Endothelial cell of umbilical vein (primary cell): ENCODE measurements at regions of chr3 and their contacts with region 1.

Region 1: GRCh38 chr3:30518181-30518864 is 88.1 kb upstream of the TGFBR2 start:
- DNase-seq: peak; percentile 99
- H3K4me3 ChIP-seq: no peak overlapping the region
- H3K27ac ChIP-seq: peak overlapping the region; percentile 93
- H3K4me1 ChIP-seq: peaks cover 66% of the 10 kb centered on the region
- H3K27me3 ChIP-seq: no peaks in the 10 kb centered on the region
- CTCF ChIP-seq: peak; percentile 17 to 37
- POLR2A ChIP-seq: peak; percentile 81

Region 2: GRCh38 chr3:30112902-30113484 is 405.3 kb before region 1 on chr3:
- CTCF ChIA-PET with region 1: interaction called, 3 read pairs
- POLR2A ChIA-PET with region 1: no interaction called
- dilution Hi-C with region 1: no loop called
- intact Hi-C with region 1: loop called (anchors 1 kb)
- DNase-seq: peak; percentile 76
- H3K4me3 ChIP-seq: no peak overlapping the region
- H3K27ac ChIP-seq: no peak overlapping the region
- H3K4me1 ChIP-seq: no peaks in the 10 kb centered on the region
- H3K27me3 ChIP-seq: peaks cover 0 to 2% of the 10 kb centered on the region in 2 experiments
- CTCF ChIP-seq: peak; percentile 26 to 37
- POLR2A ChIP-seq: no peak

Region 3: DNA sequence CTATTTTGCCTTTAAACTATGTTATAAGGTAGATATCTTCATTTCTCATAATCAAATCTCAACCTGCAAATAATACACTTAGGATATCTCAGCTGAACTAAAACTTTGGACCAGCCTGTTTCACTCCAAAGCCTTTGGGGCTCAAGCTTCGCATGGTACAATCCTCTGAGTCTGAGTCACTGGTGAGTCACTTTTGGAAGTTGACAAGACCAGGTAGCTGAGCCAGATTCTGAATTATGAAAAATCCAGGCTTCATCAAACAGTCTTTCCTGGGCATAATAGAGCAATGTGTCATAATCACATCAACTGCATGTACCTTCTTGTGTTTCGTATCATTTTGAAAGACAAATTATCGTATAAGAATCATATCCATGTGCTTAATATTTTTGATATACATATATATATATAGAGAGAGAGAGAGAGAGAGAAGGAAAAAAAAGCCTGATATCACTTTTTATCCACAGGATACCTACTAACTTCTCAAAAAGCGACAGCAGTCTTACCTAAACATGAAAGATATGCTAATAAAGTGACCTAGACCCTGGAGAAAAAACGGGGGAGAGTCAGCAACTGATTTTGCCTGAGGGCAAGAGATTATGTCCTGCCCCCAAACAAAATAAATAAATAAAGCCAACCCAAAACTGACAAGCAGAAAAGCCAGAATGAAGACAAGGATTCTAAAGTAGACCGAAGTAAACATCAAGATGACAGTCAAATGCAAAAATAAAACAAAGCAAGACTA is 175.8 kb before region 1 on chr3:
- CTCF ChIA-PET with region 1: interaction called, 8 read pairs
- POLR2A ChIA-PET with region 1: no interaction called
- dilution Hi-C with region 1: no loop called
- intact Hi-C with region 1: loop called (anchors 1 kb)
- DNase-seq: peak; percentile 94
- H3K4me3 ChIP-seq: peak overlapping the region in 1 of 3 experiments; percentile 32
- H3K27ac ChIP-seq: peak overlapping the region; percentile 98
- H3K4me1 ChIP-seq: peaks cover 62% of the 10 kb centered on the region
- H3K27me3 ChIP-seq: no peaks in the 10 kb centered on the region
- CTCF ChIP-seq: no peak
- POLR2A ChIP-seq: no peak

Region 4: DNA sequence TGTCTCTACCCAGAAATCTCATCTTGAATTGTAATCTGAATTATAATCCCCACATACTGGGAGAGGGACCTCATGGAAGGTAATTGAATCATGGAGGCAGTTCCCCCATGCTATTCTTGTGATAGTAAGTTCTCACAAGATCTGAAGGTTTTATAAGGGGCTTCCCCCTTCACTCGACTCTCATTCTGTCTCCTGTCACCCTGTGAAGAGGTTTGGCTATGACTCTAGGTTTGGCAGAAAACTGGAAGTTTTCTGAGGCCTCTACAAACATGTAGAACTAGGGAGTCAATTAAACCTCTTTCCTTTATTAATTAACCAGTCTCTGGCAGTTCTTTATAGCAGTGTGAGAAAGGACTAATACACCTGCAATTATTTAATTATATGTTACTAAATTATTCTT is 37.1 kb before region 1 on chr3:
- CTCF ChIA-PET with region 1: no interaction called
- POLR2A ChIA-PET with region 1: no interaction called
- dilution Hi-C with region 1: no loop called
- intact Hi-C with region 1: no loop called
- DNase-seq: no peak
- H3K4me3 ChIP-seq: no peak overlapping the region
- H3K27ac ChIP-seq: no peak overlapping the region
- H3K4me1 ChIP-seq: peaks cover 8% of the 10 kb centered on the region
- H3K27me3 ChIP-seq: no peaks in the 10 kb centered on the region
- CTCF ChIP-seq: no peak
- POLR2A ChIP-seq: no peak

Region 5: DNA sequence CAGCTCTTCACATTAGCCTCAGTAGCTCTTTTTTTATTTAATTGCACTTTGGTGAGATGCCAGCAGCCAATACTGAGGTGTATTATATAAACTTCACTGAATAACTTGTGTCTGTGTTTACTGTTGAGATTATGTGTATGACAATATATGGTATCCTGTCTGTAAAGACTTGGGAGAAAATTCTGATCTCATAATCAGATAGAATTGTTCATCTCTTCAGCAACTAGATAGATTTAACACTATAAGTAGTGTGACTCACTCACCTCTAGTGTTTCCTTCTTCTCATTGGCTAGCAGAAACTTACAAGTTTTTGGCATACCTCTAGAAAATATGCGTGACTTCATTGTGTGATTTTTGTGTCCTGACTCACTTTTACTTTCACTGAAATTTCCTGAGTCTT is 20.5 kb after region 1 on chr3:
- CTCF ChIA-PET with region 1: interaction called, 10 read pairs
- POLR2A ChIA-PET with region 1: interaction called, 3 read pairs
- dilution Hi-C with region 1: no loop called
- intact Hi-C with region 1: loop called (anchors 1 kb)
- DNase-seq: peak; percentile 93
- H3K4me3 ChIP-seq: no peak overlapping the region
- H3K27ac ChIP-seq: peak overlapping the region; percentile 97
- H3K4me1 ChIP-seq: peaks cover 26% of the 10 kb centered on the region
- H3K27me3 ChIP-seq: no peaks in the 10 kb centered on the region
- CTCF ChIP-seq: no peak
- POLR2A ChIP-seq: no peak

Region 6: GRCh38 chr3:30628901-30629590 is 110.7 kb after region 1 on chr3:
- CTCF ChIA-PET with region 1: interaction called, 6 read pairs
- POLR2A ChIA-PET with region 1: no interaction called
- dilution Hi-C with region 1: no loop called
- intact Hi-C with region 1: loop called (anchors 1 kb)
- DNase-seq: no peak
- H3K4me3 ChIP-seq: no peak overlapping the region
- H3K27ac ChIP-seq: peak overlapping the region; percentile 39
- H3K4me1 ChIP-seq: peaks cover 87% of the 10 kb centered on the region
- H3K27me3 ChIP-seq: no peaks in the 10 kb centered on the region
- CTCF ChIP-seq: peak in 1 of 2 donors; percentile 6
- POLR2A ChIP-seq: no peak

Region 7: DNA sequence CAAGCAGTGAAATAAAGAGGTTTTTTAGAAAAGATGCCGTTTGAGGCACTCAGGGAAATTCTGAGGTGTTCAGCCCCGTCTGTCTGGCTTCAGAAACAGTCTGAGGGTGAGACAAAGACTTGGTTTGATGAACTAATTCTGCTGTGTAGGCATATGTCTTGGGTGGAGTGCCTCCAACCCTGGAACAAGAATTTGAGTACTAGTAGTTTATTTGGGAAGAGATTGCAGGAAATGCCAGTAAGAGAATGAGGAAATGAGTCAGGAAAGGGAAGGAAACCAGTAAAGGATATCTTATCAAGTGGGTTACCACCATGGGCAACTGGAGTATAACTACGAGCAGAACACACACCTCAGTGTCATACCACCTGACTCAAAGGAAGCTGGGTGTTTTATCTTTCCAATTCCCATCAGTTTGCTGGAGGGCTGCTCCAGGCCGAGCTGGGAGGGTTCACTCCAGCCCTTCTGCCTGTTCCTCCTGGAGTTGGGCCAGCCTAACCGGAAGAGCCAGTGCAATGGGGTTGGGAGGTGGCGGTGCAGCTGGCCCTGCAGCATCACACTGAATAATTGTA is 163.4 kb after region 1 on chr3:
- CTCF ChIA-PET with region 1: interaction called, 5 read pairs
- POLR2A ChIA-PET with region 1: no interaction called
- dilution Hi-C with region 1: no loop called
- intact Hi-C with region 1: loop called (anchors 1 kb)
- DNase-seq: peak; percentile 99
- H3K4me3 ChIP-seq: no peak overlapping the region
- H3K27ac ChIP-seq: peak overlapping the region; percentile 98
- H3K4me1 ChIP-seq: peaks cover 92% of the 10 kb centered on the region
- H3K27me3 ChIP-seq: no peaks in the 10 kb centered on the region
- CTCF ChIP-seq: no peak
- POLR2A ChIP-seq: peak; percentile 87

Region 8: DNA sequence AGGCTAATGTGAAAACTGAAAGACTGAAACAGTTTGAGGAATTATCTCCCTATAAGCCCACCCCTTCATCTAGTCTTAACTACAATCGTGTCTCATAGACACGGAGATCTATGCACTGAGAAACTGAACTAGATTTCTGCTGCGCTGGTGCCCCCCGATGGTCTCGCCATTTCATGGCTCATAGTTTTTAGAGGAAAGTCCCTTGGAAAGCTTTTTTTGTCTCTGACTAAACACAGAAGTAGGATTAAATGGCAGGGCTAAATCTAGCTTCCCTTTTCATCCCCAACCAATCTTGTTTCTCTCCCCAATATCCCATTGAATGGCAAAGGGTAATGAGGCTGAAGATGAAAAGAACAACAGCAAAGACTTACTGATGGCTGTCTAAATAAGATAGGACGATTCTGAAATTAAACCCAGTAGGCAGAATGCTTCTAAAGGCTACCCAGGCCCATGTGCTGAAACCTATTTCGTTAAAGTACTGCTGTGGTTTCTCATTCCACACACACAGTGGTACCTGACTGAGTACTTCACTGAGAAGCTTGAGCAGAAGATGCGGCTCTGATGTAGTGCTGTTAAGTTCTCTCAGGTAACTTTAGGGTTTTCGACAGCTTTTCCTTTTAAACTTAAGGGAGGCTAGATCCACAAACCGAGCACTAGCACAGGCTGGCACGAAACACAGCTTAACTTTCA is 233.4 kb after region 1 on chr3:
- CTCF ChIA-PET with region 1: interaction called, 4 read pairs
- POLR2A ChIA-PET with region 1: no interaction called
- dilution Hi-C with region 1: no loop called
- intact Hi-C with region 1: loop called (anchors 2 kb)
- DNase-seq: peak; percentile 78
- H3K4me3 ChIP-seq: no peak overlapping the region
- H3K27ac ChIP-seq: no peak overlapping the region
- H3K4me1 ChIP-seq: peaks cover 21% of the 10 kb centered on the region
- H3K27me3 ChIP-seq: no peaks in the 10 kb centered on the region
- CTCF ChIP-seq: peak; percentile 49 to 65
- POLR2A ChIP-seq: no peak